ENCODE measurements at regions of chr4 and their contacts with region 1.

Region 1: DNA sequence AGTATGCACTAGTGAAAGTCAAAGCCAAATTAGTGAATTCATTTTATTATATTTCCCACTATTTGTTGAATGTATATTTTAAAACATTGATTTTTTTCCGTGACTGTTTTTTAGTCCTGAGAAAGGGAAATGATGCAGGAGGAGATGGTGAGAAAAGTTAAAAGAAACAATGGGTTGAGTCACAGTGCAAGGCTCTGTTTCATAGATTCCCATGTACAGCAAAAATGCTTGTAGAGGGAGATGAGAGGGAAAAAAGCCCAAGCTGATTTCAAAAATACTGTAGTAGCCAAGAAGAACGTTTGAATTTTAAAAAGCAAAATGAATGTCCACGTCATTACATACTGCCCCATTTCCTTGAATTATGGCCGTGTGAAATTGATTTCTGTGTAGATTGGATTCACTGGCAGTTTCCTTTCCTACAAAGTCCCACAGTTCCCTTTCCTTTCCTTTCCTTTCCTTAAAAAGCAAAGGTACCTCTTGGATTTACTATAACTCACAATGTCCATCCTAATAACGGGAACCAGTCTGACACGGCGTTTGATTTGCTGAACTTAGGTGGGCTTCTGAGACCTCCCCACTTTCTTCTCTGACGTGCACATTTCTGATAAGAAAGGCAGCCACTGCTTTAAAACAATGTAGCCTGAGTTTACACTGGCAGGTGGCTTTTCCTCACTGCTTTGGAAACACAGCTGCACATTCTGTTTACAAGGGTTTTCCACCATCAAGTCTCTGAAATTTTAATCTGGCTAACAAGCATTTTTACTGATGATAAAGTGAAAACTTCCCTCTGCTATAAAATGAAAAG is 63.7 kb downstream of the SPCS3 start:
- DNase-seq: no peak
- ATAC-seq: peak; percentile 59 to 94
- H3K4me3 ChIP-seq: peak overlapping the region; percentile 31
- H3K27ac ChIP-seq: no peak overlapping the region
- H3K4me1 ChIP-seq: no peaks in the 10 kb centered on the region
- H3K27me3 ChIP-seq: no peaks in the 10 kb centered on the region

Region 2: GRCh38 chr4:175657571-175657970 is 725.9 kb before region 1 on chr4:
- intact Hi-C with region 1: no loop called
- DNase-seq: no peak
- ATAC-seq: no peak
- H3K4me3 ChIP-seq: no peak overlapping the region
- H3K27ac ChIP-seq: no peak overlapping the region
- H3K4me1 ChIP-seq: no peaks in the 10 kb centered on the region
- H3K27me3 ChIP-seq: no peaks in the 10 kb centered on the region

Region 3: DNA sequence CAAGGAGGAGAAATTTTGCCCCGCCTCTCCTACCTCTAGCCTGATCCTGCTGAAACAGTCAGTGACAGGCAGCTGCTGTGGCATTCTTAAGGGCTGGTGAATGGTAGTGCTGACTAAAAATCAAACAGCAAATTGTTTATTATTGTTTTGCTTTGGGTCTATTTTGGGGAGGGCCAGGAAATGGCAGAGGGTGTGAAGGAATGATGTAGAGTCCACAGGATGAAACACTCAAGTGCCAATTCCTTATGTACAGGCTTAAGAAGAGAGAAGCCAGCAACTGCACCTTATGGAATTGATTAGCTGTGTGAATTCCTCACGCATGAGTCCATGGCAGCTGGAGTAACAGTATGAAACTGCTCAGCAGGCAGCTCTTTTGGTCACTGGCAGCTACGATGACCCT is 369.6 kb after region 1 on chr4:
- intact Hi-C with region 1: no loop called
- DNase-seq: no peak
- ATAC-seq: peak in 1 of 2 donors; percentile 34
- H3K4me3 ChIP-seq: no peak overlapping the region
- H3K27ac ChIP-seq: no peak overlapping the region
- H3K4me1 ChIP-seq: no peaks in the 10 kb centered on the region
- H3K27me3 ChIP-seq: no peaks in the 10 kb centered on the region

Region 4: GRCh38 chr4:177041356-177041755 is 657.9 kb after region 1 on chr4:
- intact Hi-C with region 1: loop called in 3 of 4 experiments (anchors 5 to 10 kb)
- DNase-seq: no peak
- ATAC-seq: no peak
- H3K4me3 ChIP-seq: no peak overlapping the region
- H3K27ac ChIP-seq: no peak overlapping the region
- H3K4me1 ChIP-seq: no peaks in the 10 kb centered on the region
- H3K27me3 ChIP-seq: no peaks in the 10 kb centered on the region